H1 (cell line): ENCODE measurements at regions of chr1 and their contacts with region 1.

Region 1: GRCh38 chr1:119870917-119871596 is 25.3 kb downstream of the ADAM30 start:
- DNase-seq: peak; percentile 78 to 100
- H3K4me3 ChIP-seq: no peak overlapping the region
- H3K27ac ChIP-seq: no peak overlapping the region
- H3K4me1 ChIP-seq: no peaks in the 10 kb centered on the region
- H3K27me3 ChIP-seq: no peaks in the 10 kb centered on the region; a peak in 1 of 7 replicates
- CTCF ChIP-seq: peak; percentile 89 to 94 (median 93)
- EP300 ChIP-seq: no peak
- POLR2A ChIP-seq: no peak
- RAD21 ChIP-seq: peak; percentile 92 to 96

Region 2: GRCh38 chr1:119667173-119667572 is 203.9 kb before region 1 on chr1:
- CTCF ChIA-PET with region 1: no interaction called
- POLR2A ChIA-PET with region 1: no interaction called
- DNase-seq: no peak
- H3K4me3 ChIP-seq: no peak overlapping the region
- H3K27ac ChIP-seq: no peak overlapping the region
- H3K4me1 ChIP-seq: peaks cover 0 to 1% (median 0%) of the 10 kb centered on the region in 4 experiments; a peak in 1 of 7 replicates
- H3K27me3 ChIP-seq: no peaks in the 10 kb centered on the region
- CTCF ChIP-seq: no peak
- EP300 ChIP-seq: no peak
- POLR2A ChIP-seq: no peak
- RAD21 ChIP-seq: no peak

Region 3: DNA sequence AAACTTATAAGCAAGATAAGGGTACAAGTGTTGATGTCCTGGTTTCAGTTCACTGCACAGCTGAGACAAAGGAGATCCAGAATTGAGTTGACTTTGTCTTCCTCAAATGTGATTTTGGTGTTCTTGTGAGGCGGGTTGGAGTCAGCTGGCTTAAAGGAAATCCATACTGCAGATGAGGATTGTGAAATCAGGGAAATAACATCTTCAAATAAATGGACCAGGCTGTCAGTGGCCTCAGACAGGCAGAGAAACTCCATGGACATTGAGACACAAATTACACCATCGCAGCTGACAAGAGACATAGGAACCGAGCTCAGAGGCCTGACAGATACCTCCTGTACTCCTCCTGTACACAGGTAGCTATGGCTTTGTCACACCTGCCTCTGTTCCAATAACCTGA is 32.8 kb before region 1 on chr1:
- CTCF ChIA-PET with region 1: interaction called, 15 read pairs
- POLR2A ChIA-PET with region 1: no interaction called
- DNase-seq: no peak
- H3K4me3 ChIP-seq: no peak overlapping the region
- H3K27ac ChIP-seq: no peak overlapping the region
- H3K4me1 ChIP-seq: no peaks in the 10 kb centered on the region
- H3K27me3 ChIP-seq: no peaks in the 10 kb centered on the region; a peak in 1 of 7 replicates
- CTCF ChIP-seq: no peak
- EP300 ChIP-seq: no peak
- POLR2A ChIP-seq: no peak
- RAD21 ChIP-seq: no peak

Region 4: DNA sequence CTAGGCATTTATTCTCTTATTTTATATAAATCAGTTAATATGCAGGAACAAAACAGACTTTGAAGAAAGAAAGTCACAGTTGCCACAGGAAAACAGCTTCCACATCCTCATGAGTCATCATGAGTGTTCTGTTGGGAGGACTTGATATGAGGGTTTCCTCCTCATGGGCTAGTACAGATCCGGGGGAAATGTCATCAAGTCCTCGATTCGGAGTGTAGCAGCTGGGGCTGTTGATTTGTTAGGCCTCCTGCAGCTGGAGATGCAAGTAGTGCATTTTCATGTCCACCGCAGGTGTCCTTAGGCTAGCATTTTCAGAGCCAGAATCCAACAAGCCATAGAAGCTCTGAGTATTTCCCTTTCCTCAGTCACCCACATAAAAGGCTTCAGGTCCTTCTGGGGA is 11.4 kb before region 1 on chr1:
- CTCF ChIA-PET with region 1: interaction called, 41 read pairs
- POLR2A ChIA-PET with region 1: no interaction called
- DNase-seq: no peak
- H3K4me3 ChIP-seq: no peak overlapping the region
- H3K27ac ChIP-seq: no peak overlapping the region
- H3K4me1 ChIP-seq: no peaks in the 10 kb centered on the region
- H3K27me3 ChIP-seq: no peaks in the 10 kb centered on the region
- CTCF ChIP-seq: no peak
- EP300 ChIP-seq: no peak
- POLR2A ChIP-seq: no peak
- RAD21 ChIP-seq: no peak

Region 5: DNA sequence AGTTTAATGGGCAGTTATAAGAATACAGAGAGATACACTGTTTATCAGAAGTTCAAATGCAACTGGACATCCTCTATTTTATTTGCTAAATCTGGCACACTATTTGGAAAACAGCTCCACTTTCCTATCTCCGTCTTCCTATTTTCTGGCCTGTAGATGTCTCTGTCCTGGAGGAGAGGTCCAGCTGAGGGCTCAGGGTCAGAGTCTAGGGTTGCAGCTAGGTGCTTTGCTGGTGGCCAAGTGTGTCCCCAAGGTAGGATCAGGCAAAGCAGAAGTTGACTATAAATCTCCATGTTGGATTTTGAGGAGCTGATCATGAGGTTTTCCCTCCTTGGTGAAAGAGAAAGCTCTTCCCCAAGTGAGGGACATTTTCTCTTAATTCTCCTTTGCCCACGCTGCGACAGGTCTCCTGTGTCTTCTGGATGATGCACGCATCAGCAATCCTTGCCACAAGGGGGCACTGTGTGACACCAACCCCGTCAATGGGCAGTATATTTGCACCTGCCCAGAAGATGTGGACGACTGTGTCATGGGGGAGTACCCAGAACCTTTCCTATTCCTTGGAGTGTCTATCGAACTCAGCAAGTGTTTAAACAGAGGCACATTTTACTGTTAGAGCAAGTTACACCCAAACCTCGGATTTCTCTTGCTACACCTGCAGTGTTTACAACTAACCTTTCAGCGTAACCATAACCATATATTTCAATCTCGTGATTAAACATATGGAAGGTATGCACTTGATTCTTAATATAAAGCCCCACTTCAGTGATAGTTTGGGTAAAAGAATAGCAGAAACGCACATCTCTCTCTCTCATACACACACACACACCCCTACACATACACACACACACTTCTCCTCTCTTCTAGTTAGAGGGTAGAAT is 15.1 kb after region 1 on chr1:
- CTCF ChIA-PET with region 1: interaction called, 62 read pairs
- POLR2A ChIA-PET with region 1: no interaction called
- DNase-seq: peak in 1 of 2 experiments; percentile 88
- H3K4me3 ChIP-seq: no peak overlapping the region
- H3K27ac ChIP-seq: no peak overlapping the region
- H3K4me1 ChIP-seq: no peaks in the 10 kb centered on the region
- H3K27me3 ChIP-seq: no peaks in the 10 kb centered on the region
- CTCF ChIP-seq: peak; percentile 82 to 94 (median 88)
- EP300 ChIP-seq: no peak
- POLR2A ChIP-seq: no peak
- RAD21 ChIP-seq: peak; percentile 72 to 79

Region 6: DNA sequence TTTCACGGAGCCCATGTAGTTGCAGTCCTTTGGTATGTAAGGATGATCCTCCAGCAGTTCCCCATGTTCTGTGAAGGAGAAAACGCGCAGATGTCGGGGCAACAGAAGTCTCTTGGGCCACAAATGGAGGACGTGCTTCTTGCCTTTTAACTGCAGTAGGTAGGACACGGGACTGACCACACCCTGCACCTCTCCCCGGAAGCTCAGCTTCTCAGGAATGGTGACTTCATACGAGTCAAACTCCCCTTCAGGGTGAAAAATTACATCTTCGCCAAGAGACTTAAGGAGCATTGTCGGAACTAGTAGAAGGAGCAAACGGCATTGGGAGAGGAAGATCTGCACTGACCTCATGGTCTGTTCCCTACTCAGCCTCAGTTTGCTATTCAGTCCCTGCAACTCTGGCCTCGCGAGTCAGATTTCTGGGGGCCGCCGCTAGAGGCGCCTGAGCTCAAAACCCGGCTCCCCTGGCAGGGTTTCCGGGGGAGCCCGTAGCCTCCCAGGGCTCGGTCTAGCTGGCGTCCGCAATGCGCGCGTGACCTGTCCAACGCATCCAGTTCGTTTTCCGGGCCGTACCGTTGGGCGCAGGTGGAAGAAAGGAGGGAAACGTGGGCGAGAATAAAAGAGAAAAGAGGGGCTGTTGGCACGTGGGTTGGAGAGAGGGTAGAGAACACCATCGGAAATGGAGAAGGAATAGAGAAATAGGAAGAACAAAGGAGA is 25.1 kb after region 1 on chr1 and contains the start of gene ADAM30:
- CTCF ChIA-PET with region 1: interaction called, 21 read pairs
- POLR2A ChIA-PET with region 1: no interaction called
- DNase-seq: peak in 1 of 2 experiments; percentile 86
- H3K4me3 ChIP-seq: 0 out of 8 replicates have a peak within 1 kb of the TSS, but pooled peaks of 1 of the 4 experiments have one; percentile 4
- H3K27ac ChIP-seq: no peak within 1 kb of the TSS
- H3K4me1 ChIP-seq: no peaks in the 10 kb centered on the region
- H3K27me3 ChIP-seq: peaks cover 0 to 8% (median 7%) of the 10 kb centered on the region in 4 experiments; a peak in 6 of 7 replicates
- CTCF ChIP-seq: peak; percentile 63 to 67 (median 65)
- EP300 ChIP-seq: no peak
- POLR2A ChIP-seq: no peak
- RAD21 ChIP-seq: peak; percentile 28 to 56; a peak in 2 of 4 replicates
- total RNA-seq, gene ADAM30: not detected in 2 replicates

Region 7: GRCh38 chr1:119960501-119960900 is 89.4 kb after region 1 on chr1:
- CTCF ChIA-PET with region 1: no interaction called
- POLR2A ChIA-PET with region 1: no interaction called
- DNase-seq: no peak
- H3K4me3 ChIP-seq: no peak overlapping the region
- H3K27ac ChIP-seq: no peak overlapping the region
- H3K4me1 ChIP-seq: no peaks in the 10 kb centered on the region
- H3K27me3 ChIP-seq: no peaks in the 10 kb centered on the region
- CTCF ChIP-seq: no peak
- EP300 ChIP-seq: no peak
- POLR2A ChIP-seq: no peak
- RAD21 ChIP-seq: no peak